ENCODE measurements at regions of chr1 and their contacts with region 1.

Region 1: DNA sequence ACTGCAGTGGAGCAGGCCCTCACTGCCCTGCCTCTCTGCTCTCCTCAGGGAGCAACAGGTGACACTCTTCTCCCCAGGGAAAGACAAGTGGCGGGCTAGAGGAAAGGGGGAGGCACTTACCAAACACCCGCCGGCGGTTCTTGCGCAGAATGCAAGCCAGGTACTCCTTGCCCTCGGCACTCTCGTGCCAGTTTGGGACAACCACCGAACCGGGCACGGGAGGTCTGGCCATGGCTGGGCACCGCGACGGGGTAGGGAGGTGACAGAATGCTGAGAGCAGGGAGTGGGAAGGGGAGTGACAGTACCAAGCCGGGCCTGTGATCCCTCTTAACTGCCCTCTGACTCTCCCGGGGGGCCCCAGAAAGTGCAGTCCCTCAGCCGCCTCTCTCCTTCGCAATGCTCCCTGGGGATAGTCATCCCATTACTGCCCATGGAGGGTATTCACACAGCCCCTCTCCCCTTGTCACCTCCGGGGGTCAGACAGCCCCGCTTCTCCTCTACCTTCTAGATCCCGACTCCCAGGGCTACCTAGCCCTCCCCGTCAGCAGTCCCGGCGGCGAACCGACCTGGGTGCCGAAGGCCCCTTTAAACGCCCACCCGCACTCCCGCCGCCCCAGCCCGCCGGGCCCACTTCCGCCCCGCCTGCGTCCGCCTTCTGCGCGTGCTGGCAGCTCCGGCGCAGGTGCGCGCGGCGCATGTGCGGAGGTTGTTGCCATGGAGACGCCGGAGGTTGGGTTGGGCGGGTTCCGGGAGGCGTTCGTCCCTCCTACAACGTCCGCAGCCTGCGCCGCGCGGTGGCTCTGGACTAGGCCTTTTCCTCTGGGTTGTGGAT is at the start of gene CPLANE2:
- DNase-seq: peak; percentile 88
- ATAC-seq: peak; percentile 95
- H3K4me3 ChIP-seq: peak within 1 kb of the TSS; percentile 71
- H3K27ac ChIP-seq: peak within 1 kb of the TSS; percentile 81
- H3K4me1 ChIP-seq: peaks cover 10% of the 10 kb centered on the region
- H3K27me3 ChIP-seq: no peaks in the 10 kb centered on the region
- CTCF ChIP-seq: 0 out of 2 replicates have a peak, but pooled peaks have one; percentile 15
- POLR2A ChIP-seq: peak; percentile 36; the same call in 1 of the 2 replicates
- RAD21 ChIP-seq: no peak
- total RNA-seq, gene CPLANE2: 3.2 and 3.3 TPM in 2 replicates

Region 2: DNA sequence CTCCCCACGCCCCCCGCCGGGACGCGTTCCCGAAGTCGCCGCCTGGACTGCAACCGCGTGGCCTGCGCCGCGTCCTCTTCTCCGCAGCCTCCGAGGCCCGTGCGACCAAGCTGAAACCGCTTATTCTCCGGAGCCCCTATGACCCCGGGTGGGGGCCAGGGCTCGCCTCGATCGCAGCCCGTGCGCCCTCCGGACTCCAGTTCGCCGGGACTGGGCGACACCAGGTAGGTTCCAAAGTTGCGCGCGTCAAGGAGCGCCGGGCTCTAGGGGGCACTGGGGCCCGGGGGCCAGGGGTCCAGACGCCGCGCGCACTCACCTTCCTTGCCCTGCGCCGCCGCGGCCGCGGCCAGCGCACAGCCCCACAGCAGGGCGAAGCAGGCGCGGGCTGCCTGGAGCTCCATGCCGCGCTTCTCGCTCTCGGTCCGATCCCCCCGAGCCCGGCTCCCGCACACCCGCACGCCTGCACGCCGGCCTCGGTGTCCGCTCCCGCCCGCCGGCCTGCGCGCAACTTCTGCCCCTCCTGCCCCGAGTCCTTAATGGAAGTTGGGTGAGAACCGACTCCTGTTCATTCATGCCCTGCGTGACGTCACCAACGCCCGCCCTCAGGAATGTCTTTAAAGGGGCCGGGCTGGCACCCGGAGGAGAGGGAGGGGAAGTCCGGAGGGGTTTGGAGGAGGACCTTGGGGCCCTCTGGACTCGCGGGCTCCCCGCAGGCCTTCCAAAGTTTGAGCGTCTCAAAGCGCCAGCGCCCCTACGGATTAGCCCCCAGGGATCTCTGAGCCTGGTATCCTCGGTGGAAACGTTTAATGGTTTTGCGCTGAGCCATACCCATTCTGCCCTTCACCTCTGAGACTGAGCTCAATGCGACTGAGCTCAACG is 81.0 kb before region 1 on chr1 and contains the start of gene EPHA2:
- CTCF ChIA-PET with region 1: no interaction called
- POLR2A ChIA-PET with region 1: no interaction called
- dilution Hi-C with region 1: no loop called
- in situ Hi-C with region 1: no loop called
- intact Hi-C with region 1: no loop called
- DNase-seq: peak; percentile 86
- ATAC-seq: peak; percentile 68
- H3K4me3 ChIP-seq: peak within 1 kb of the TSS; percentile 83
- H3K27ac ChIP-seq: peak within 1 kb of the TSS; percentile 93
- H3K4me1 ChIP-seq: peaks cover 37% of the 10 kb centered on the region
- H3K27me3 ChIP-seq: no peaks in the 10 kb centered on the region
- CTCF ChIP-seq: no peak
- POLR2A ChIP-seq: peak; percentile 84
- RAD21 ChIP-seq: no peak
- total RNA-seq, gene EPHA2: 22.5 and 24.0 TPM in 2 replicates

Region 3: GRCh38 chr1:16217061-16217785 is 19.5 kb before region 1 on chr1:
- CTCF ChIA-PET with region 1: interaction called, 3 read pairs
- POLR2A ChIA-PET with region 1: interaction called, 21 read pairs
- dilution Hi-C with region 1: no loop called
- in situ Hi-C with region 1: no loop called
- intact Hi-C with region 1: loop called (anchors 2 kb)
- DNase-seq: peak; percentile 93
- ATAC-seq: peak; percentile 100
- H3K4me3 ChIP-seq: peak overlapping the region; percentile 65
- H3K27ac ChIP-seq: no peak overlapping the region
- H3K4me1 ChIP-seq: no peaks in the 10 kb centered on the region
- H3K27me3 ChIP-seq: peaks cover 2% of the 10 kb centered on the region; the same call in 1 of the 2 replicates
- CTCF ChIP-seq: no peak
- POLR2A ChIP-seq: no peak
- RAD21 ChIP-seq: no peak

Measured in IMR-90 (cell line).